OCI-LY7 (cell line): ENCODE measurements at regions of chr14 and their contacts with region 1.

Region 1: GRCh38 chr14:20613094-20614037 is 22.2 kb upstream of the RNASE12 start:
- DNase-seq: peak; percentile 93
- H3K4me3 ChIP-seq: peak overlapping the region; percentile 72
- H3K27ac ChIP-seq: peak overlapping the region; percentile 11
- H3K4me1 ChIP-seq: peaks cover 47% of the 10 kb centered on the region
- CTCF ChIP-seq: peak; percentile 79

Region 2: DNA sequence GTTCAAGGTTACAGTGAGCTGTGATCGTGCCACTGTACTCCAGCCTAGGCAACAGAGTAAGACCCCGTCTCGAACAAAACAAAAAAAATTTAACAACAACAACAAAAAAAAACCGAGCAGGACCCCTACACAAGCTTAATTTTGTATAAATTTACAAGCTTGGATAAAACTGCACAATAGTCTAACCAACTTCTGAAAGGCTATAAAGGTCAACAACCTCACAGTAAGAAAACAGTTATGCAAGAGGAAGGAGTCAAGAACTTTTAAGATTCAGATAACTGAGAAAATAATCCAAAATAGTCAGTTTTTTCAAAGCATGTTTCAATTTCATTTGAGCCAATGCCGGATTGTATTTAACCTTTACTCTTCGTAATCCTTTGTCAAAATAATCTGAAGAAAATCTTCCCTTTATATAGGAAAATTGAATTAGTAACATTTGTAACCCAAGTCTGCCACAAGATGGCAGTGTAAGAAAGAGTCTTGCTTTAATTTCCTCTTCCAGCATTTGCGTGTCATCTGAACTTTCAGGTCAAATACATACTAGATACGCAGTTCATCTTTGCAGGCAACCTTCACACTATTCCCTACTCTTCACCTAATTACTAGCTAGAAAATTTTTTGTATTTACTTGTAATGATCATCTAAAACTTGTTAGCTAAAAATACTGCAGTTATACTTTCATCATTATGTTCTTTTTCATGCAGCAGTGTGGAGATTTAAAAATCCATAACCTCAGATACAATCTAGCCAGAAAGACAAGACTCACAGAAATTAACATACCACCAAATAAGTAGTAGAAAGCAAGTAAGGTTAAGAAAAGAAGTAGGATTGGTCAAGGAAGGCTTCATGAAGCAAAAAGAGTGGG is 286.1 kb before region 1 on chr14:
- CTCF ChIA-PET with region 1: interaction called, 3 read pairs
- POLR2A ChIA-PET with region 1: interaction called, 11 read pairs
- intact Hi-C with region 1: loop called (anchors 1 kb)
- DNase-seq: peak; percentile 79
- H3K4me3 ChIP-seq: peak overlapping the region; percentile 13
- H3K27ac ChIP-seq: peak overlapping the region; percentile 10
- H3K4me1 ChIP-seq: peaks cover 50% of the 10 kb centered on the region
- CTCF ChIP-seq: peak; percentile 97

Region 3: GRCh38 chr14:20469242-20469889 is 144.0 kb before region 1 on chr14 and contains the start of gene PNP:
- CTCF ChIA-PET with region 1: no interaction called
- POLR2A ChIA-PET with region 1: interaction called, 3 read pairs
- intact Hi-C with region 1: loop called (anchors 5 kb)
- DNase-seq: peak; percentile 92
- H3K4me3 ChIP-seq: peak within 1 kb of the TSS; percentile 83
- H3K27ac ChIP-seq: peak within 1 kb of the TSS; percentile 71
- H3K4me1 ChIP-seq: peaks cover 23% of the 10 kb centered on the region
- CTCF ChIP-seq: peak; percentile 21; the same call in 1 of the 2 replicates
- total RNA-seq, gene PNP: 120 and 127 TPM in 2 replicates

Region 4: GRCh38 chr14:20587489-20588154 is 25.7 kb before region 1 on chr14 and contains the start of gene RNASE11:
- CTCF ChIA-PET with region 1: no interaction called
- POLR2A ChIA-PET with region 1: no interaction called
- intact Hi-C with region 1: no loop called
- DNase-seq: no peak
- H3K4me3 ChIP-seq: no peak within 1 kb of the TSS
- H3K27ac ChIP-seq: no peak within 1 kb of the TSS
- H3K4me1 ChIP-seq: no peaks in the 10 kb centered on the region
- CTCF ChIP-seq: no peak
- total RNA-seq, gene RNASE11: not detected in 2 replicates

Region 5: GRCh38 chr14:20662968-20663732 is 49.8 kb after region 1 on chr14:
- CTCF ChIA-PET with region 1: no interaction called
- POLR2A ChIA-PET with region 1: interaction called, 3 read pairs
- intact Hi-C with region 1: loop called (anchors 1 kb)
- DNase-seq: peak; percentile 59
- H3K4me3 ChIP-seq: no peak overlapping the region
- H3K27ac ChIP-seq: no peak overlapping the region
- H3K4me1 ChIP-seq: peaks cover 10% of the 10 kb centered on the region
- CTCF ChIP-seq: peak; percentile 75

Region 6: DNA sequence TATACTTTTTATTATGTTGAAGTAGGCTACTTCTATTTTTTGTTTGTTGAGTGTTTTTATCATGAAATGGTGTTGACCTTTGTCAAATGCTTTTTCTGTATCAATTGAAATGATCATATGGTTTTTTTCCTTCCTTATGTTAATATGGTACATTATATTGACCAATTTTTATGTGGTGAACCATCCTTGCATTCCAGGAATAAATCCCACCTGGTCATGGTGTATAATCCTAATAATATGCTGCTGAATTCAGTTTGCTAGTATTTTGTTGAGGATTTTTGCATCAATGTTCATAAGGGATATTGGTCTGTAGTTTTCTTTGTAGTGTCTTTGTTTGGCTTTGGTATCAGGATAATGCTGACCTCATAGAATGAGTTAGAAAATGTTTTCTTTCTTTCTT is 532.1 kb after region 1 on chr14:
- CTCF ChIA-PET with region 1: no interaction called
- POLR2A ChIA-PET with region 1: no interaction called
- intact Hi-C with region 1: no loop called
- DNase-seq: no peak
- H3K4me3 ChIP-seq: no peak overlapping the region
- H3K27ac ChIP-seq: no peak overlapping the region
- H3K4me1 ChIP-seq: no peaks in the 10 kb centered on the region
- CTCF ChIP-seq: no peak